Panc1 (cell line): ENCODE measurements at regions of chr16 and their contacts with region 1.

Region 1: DNA sequence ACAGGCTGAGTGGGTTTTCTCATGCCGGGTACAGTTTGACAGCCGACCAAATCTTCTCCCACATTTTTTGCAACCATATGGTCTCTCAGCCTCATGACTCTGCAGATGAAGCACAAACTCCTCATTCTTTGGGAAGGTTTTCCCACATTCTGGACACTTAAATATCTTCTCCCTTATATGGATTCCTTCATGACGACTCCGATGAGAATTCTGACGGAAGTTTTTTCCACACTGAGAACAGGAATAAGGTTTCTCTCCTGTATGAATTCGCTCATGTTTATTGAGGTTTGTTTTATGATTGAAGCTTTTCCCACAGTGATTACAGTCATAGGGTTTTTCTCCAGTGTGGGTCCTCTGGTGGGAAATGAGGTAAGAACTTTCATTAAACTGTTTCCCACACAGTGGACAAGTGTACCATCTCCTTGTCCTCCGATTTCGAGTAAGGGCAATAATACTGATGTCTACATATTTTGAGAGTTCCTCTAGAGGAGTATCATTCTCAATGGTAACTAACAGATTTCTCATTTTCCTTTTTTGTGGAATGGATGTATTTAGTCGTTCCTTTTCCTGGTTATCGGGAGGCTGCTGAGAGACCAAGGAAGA is 10.9 kb downstream of the ZNF200 start:
- DNase-seq: no peak
- ATAC-seq: no peak
- H3K4me3 ChIP-seq: no peak overlapping the region
- H3K27ac ChIP-seq: no peak overlapping the region
- H3K4me1 ChIP-seq: no peaks in the 10 kb centered on the region
- H3K27me3 ChIP-seq: no peaks in the 10 kb centered on the region
- CTCF ChIP-seq: no peak

Region 2: GRCh38 chr16:2531767-2532493 is 692.1 kb before region 1 on chr16:
- CTCF ChIA-PET with region 1: no interaction called
- POLR2A ChIA-PET with region 1: no interaction called
- in situ Hi-C with region 1: no loop called
- intact Hi-C with region 1: no loop called
- DNase-seq: peak; percentile 77
- ATAC-seq: peak; percentile 92
- H3K4me3 ChIP-seq: peak overlapping the region; percentile 50 to 75
- H3K27ac ChIP-seq: peak overlapping the region; percentile 87
- H3K4me1 ChIP-seq: peaks cover 16% of the 10 kb centered on the region
- H3K27me3 ChIP-seq: no peaks in the 10 kb centered on the region
- CTCF ChIP-seq: no peak

Region 3: DNA sequence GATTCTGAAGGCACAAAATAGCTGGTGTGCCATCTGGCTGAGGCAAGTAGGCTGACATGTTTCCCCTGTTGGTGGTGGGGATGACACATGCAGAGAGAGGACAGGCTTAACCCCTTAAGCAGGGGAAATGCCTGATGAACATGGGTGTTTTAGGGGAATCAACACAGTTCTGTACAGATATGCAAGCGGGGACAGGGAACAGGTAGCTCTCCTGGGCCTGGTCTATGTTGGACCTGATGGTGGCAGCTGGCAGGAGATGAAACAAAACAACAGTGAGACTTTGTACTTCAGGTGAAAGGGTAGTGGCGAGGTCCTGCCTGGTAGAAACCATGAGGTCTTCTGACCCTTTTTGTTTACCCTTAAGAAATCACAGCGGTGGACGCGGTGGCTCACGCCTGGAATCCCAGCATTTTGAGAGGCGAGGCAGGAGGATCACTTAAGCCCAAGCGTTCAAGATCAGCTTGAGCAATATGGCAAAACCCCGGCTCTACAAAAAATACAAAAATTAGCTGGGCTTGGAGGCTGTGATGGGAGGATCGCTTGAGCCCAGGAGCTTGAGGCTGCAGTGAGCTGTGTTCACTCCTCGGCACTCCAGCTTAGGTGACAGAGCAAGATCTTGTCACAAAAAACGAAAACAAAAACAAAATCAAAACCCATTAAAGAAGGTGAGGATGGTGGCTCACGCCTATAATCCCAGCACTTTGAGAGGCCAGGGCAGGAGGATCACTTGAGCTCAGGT is 25.5 kb before region 1 on chr16:
- CTCF ChIA-PET with region 1: no interaction called
- POLR2A ChIA-PET with region 1: no interaction called
- in situ Hi-C with region 1: no loop called
- intact Hi-C with region 1: no loop called
- DNase-seq: no peak
- ATAC-seq: no peak
- H3K4me3 ChIP-seq: no peak overlapping the region
- H3K27ac ChIP-seq: no peak overlapping the region
- H3K4me1 ChIP-seq: peaks cover 6% of the 10 kb centered on the region; the same call in 1 of the 2 replicates
- H3K27me3 ChIP-seq: no peaks in the 10 kb centered on the region
- CTCF ChIP-seq: no peak

Region 4: DNA sequence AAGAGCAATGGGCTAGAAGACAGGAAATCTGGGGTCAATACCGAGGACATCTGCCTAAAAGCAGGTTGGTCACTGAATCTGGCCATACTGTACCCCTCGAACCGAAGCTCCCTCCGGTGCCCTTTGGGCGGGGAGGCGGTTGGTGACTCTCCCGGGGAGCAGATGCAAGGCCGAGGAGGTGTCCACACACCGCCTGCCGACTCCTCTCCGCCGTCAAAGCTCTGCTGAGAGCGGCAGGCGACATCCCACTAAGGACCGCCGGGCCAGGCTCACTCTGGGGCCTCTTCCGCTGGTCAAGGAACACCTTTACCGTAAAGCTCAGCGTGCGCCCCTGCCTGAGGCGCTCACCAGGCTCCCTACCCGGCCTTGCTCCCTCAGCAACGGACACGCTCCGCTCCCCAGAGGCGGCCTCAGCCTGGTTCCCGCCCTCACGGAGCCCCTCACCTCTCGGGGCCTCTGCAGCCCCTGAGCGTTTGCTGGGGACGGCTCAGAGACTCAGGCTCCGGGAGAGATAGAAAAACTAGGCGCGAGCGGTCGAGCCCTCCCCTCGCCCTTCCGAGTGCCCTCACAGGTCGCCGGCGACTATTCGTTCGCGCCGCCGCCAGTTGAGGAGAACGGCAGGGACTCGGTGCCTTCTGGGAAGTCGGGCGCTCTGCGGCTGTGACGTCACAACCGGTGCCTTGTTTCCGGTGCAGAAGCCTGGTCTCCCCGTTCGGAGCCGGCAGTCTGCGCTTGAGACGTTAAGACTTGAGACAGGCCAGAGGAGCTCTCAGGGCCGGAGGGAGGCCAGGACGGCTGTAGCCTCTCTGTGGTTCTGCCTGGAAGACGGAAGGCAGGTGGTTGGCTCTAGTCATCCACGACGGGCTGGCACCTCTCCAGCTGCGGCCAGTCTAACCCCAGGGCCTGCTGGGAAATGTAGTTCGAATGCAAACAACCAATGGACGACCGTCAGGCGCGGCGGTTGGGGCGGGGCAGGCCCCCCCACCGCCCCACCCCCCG is 10.8 kb after region 1 on chr16 and contains the start of gene ZNF200:
- CTCF ChIA-PET with region 1: no interaction called
- POLR2A ChIA-PET with region 1: interaction called, 10 read pairs
- in situ Hi-C with region 1: no loop called
- intact Hi-C with region 1: no loop called
- DNase-seq: peak; percentile 89
- ATAC-seq: peak; percentile 99
- H3K4me3 ChIP-seq: peak within 1 kb of the TSS; percentile 86 to 94
- H3K27ac ChIP-seq: peak within 1 kb of the TSS; percentile 93
- H3K4me1 ChIP-seq: 0 out of 2 replicates have a peak, but pooled peaks cover 3% of the 10 kb centered on the region
- H3K27me3 ChIP-seq: no peaks in the 10 kb centered on the region
- CTCF ChIP-seq: no peak
- total RNA-seq, gene ZNF200: 12.4 TPM

Region 5: DNA sequence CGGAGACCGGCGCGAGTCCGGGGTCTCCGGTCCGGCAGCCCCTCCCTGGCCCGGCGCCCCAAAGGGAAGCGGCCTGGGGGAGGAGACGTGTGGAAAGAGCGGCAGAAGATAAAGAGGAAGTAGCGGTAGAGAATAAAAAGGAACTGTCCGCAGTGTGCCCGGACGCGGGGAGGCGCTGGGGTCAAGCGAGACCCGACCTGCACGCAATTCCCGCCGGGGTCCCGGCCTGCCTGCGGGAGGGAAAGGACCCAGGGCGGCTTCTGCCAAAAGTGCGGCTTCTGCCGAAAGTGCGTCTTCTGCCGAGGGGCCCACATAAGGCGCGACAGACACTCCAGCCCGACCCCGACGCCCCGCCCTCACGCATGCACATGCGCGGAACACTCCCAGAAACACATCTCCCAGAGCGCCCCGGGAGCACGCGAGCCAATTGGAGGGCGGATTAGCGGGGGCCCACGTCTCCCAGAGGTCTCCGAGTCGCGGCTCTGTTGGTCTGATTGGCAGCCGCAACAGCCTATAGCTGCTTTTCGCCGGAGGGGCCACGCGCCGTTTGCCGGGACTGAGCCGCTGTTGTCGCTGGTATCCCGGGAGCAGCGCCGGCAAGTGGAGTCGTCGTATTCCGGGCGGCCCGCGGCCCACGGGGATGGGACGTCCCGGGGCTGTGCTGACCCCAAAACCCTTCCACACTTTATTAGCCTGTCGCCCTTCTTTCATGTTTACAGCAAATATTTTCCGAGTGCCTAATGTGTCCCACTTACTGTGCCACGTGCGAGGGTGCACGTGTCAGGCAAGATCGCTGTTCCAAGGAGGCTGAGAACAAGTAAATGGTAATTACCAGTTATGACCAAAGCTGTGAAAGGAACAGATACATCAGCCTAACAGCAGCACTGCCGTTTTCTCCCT is 40.4 kb after region 1 on chr16:
- CTCF ChIA-PET with region 1: no interaction called
- POLR2A ChIA-PET with region 1: no interaction called
- in situ Hi-C with region 1: no loop called
- intact Hi-C with region 1: no loop called
- DNase-seq: peak; percentile 83
- ATAC-seq: peak; percentile 97
- H3K4me3 ChIP-seq: peak overlapping the region; percentile 77 to 92
- H3K27ac ChIP-seq: peak overlapping the region; percentile 98
- H3K4me1 ChIP-seq: peaks cover 8% of the 10 kb centered on the region; the same call in 1 of the 2 replicates
- H3K27me3 ChIP-seq: no peaks in the 10 kb centered on the region
- CTCF ChIP-seq: no peak

Region 6: DNA sequence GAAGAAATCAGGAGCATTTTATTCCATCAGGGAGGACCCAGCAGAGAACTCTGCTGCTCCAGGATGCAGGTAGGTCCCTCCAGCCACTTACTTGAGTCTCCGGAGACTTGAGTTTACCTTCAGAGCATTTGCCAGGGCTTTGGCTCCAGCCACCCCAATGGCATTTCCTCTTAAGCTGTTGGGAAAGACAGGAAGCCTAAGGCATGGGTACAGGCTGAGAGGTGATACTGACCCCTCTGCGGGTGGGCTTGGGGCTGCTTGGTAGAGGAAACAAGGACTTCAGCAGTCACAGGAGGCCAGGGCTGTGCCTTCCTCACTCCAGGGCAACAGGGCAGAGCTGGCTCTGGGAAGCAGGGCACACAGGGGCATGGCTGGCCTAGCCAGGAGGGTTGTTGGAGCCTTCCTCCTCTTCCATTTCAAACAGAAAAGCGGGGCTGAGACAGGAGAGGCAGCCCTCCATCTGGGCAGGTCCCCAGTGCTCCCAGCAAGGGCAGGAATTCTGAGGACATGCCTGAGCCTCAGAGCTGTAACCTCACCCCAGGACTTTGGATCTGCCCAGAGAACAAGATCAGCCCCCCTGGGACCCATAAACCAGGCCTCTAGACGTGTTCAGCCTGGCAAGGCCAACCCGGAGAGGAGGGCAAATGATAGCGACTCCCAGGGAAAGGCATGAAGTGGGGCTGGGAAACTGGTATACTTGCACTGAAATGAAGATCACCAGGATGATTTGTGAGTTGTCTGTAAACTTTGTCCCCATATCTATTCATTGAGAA is 318.8 kb after region 1 on chr16:
- CTCF ChIA-PET with region 1: no interaction called
- POLR2A ChIA-PET with region 1: no interaction called
- in situ Hi-C with region 1: no loop called
- intact Hi-C with region 1: no loop called
- DNase-seq: no peak
- ATAC-seq: no peak
- H3K4me3 ChIP-seq: no peak overlapping the region
- H3K27ac ChIP-seq: no peak overlapping the region
- H3K4me1 ChIP-seq: no peaks in the 10 kb centered on the region
- H3K27me3 ChIP-seq: no peaks in the 10 kb centered on the region
- CTCF ChIP-seq: no peak

Region 7: DNA sequence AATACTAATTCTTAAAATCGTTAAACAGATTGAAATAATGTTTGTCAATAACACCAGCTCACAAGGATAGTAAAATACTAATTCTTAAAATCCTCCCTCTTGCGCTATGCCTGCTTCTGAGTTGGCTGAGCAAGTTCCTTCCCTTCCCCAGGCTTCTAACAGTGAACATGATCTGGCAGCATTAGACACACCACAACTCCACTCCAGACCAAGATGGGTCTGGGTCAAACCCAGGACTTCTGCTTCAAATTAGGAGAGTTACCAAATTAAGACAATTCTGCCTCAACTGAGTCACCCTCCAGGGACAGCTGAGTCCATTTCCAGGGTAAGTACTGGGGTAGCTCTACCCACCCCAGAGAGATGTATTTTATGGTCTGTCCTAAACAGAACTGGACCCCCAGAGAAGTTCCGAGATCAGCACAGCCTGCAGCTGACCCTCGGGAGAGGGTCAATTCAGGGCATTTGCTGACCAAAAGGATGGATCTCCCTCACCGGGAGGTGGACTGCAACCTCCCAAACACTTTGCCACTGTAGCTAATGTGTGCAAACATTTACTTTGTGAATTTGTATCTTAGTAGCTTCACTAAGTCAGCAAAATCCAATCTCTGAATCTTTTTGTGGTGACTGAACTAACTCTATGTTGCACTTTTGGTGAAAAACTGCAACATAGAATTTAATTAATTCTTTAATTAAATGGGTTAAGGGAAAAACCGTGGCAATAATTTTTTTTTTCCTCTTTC is 843.4 kb after region 1 on chr16:
- CTCF ChIA-PET with region 1: no interaction called
- POLR2A ChIA-PET with region 1: interaction called, 10 read pairs
- in situ Hi-C with region 1: no loop called
- intact Hi-C with region 1: no loop called
- DNase-seq: no peak
- ATAC-seq: no peak
- H3K4me3 ChIP-seq: no peak overlapping the region
- H3K27ac ChIP-seq: peak overlapping the region; percentile 45; the same call in 1 of the 2 replicates
- H3K4me1 ChIP-seq: peaks cover 14% of the 10 kb centered on the region
- H3K27me3 ChIP-seq: no peaks in the 10 kb centered on the region
- CTCF ChIP-seq: no peak